Naive thymus-derived CD4-positive, alpha-beta T cell (primary cell): ENCODE measurements at regions of chr9 and their contacts with region 1.

Region 1: GRCh38 chr9:36008774-36009300 is 27.9 kb upstream of the RECK start:
- DNase-seq: peak; percentile 4 to 73 (median 61)
- ATAC-seq: peak; percentile 98
- H3K4me3 ChIP-seq: no peak overlapping the region
- H3K4me3 Mint-ChIP-seq: peak overlapping the region in 3 of 10 donors; percentile 20 to 26 (median 23)
- H3K27ac ChIP-seq: no peak overlapping the region
- H3K27ac Mint-ChIP-seq: peak overlapping the region in 1 of 9 donors; percentile 36
- H3K4me1 ChIP-seq: peaks cover 0 to 5% of the 10 kb centered on the region in 2 donors
- H3K4me1 Mint-ChIP-seq: peaks cover 10 to 25% (median 20%) of the 10 kb centered on the region in 7 donors
- H3K27me3 ChIP-seq: no peaks in the 10 kb centered on the region
- H3K27me3 Mint-ChIP-seq: peaks cover 4 to 47% (median 20%) of the 10 kb centered on the region in 5 donors

Region 2: GRCh38 chr9:35746583-35746982 is 262.3 kb before region 1 on chr9:
- CTCF ChIA-PET with region 1: no interaction called
- POLR2A ChIA-PET with region 1: no interaction called
- intact Hi-C with region 1: no loop called
- DNase-seq: no peak
- ATAC-seq: no peak
- H3K4me3 ChIP-seq: no peak overlapping the region
- H3K4me3 Mint-ChIP-seq: peak overlapping the region in 9 of 10 donors; percentile 54 to 93 (median 89)
- H3K27ac ChIP-seq: no peak overlapping the region
- H3K27ac Mint-ChIP-seq: peak overlapping the region in 5 of 9 donors; percentile 25 to 96 (median 49)
- H3K4me1 ChIP-seq: peaks cover 32 to 33% of the 10 kb centered on the region in 2 donors
- H3K4me1 Mint-ChIP-seq: peaks cover 43 to 83% (median 57%) of the 10 kb centered on the region in 7 donors
- H3K27me3 ChIP-seq: no peaks in the 10 kb centered on the region
- H3K27me3 Mint-ChIP-seq: no peaks in the 10 kb centered on the region

Region 3: DNA sequence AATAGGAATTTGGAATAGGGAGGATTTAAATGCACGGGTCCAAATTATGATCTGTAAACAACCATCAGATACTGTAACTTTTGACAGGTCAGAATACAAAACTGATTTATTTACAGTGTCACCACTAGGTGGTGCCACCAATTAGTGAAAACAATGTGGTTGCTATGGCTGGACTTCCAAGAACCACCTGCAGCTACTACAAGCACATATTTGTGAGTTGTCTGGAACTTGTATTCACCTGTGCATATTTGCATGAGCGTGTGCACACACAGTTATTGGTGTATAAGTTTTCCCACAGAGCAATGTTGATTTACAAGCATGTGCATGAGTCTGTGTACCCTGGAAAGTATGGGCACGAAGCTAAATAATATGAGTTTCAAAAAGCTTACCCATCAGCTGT is 105.8 kb before region 1 on chr9:
- CTCF ChIA-PET with region 1: interaction called, 3 read pairs
- POLR2A ChIA-PET with region 1: no interaction called
- intact Hi-C with region 1: loop called in 1 of 2 experiments (anchors 1 kb)
- DNase-seq: peak in 7 of 9 donors; percentile 41 to 69 (median 63)
- ATAC-seq: peak; percentile 88
- H3K4me3 ChIP-seq: no peak overlapping the region
- H3K4me3 Mint-ChIP-seq: no peak overlapping the region
- H3K27ac ChIP-seq: no peak overlapping the region
- H3K27ac Mint-ChIP-seq: peak overlapping the region in 1 of 9 donors; percentile 67
- H3K4me1 ChIP-seq: peaks cover 3 to 31% of the 10 kb centered on the region in 2 donors
- H3K4me1 Mint-ChIP-seq: peaks cover 8 to 45% (median 28%) of the 10 kb centered on the region in 7 donors
- H3K27me3 ChIP-seq: peaks cover 0 to 3% of the 10 kb centered on the region in 2 donors
- H3K27me3 Mint-ChIP-seq: peaks cover 0 to 23% (median 0%) of the 10 kb centered on the region in 5 donors

Region 4: DNA sequence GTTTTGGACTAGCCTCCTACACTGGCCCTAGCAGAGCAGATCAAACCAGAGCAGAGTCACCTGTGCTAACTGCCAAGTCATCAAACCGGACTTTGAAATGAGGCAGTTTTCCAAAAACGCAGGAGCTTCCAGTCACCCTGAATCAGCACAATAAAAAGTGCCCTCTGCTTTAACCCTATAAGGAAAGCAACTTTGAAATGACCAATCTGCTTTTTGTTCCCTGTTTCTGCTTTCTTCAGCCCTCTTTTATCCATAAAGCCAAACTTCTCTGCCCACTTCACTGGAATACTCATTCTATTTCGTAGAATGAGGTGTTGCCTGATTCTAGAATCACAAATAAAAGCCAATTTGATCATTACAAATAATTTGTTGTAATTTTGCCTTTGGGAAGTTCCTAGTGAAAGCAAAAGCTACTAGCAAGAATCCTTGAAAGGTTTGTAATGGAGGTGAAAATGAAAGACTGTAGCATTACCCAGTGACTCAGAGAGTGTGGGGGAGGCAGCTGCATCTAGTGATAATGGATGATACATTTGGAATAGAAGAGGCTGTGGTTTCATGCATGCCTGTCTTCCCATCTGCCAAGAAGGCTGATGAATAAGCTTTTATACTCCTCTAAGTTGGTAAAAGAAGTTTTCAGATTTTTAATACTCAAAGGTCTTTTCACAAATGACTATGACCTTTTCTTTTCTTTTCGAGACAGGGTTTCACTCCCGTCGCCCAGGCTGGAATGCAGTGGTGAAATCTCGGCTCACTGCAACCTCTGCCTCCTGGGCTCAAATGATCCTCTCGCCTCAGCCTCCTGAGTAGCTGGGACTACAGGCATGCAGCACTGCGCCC is 84.7 kb before region 1 on chr9:
- CTCF ChIA-PET with region 1: no interaction called
- POLR2A ChIA-PET with region 1: no interaction called
- intact Hi-C with region 1: no loop called
- DNase-seq: no peak
- ATAC-seq: no peak
- H3K4me3 ChIP-seq: no peak overlapping the region
- H3K4me3 Mint-ChIP-seq: no peak overlapping the region
- H3K27ac ChIP-seq: no peak overlapping the region
- H3K27ac Mint-ChIP-seq: peak overlapping the region in 1 of 9 donors; percentile 19
- H3K4me1 ChIP-seq: no peaks in the 10 kb centered on the region
- H3K4me1 Mint-ChIP-seq: peaks cover 1 to 27% (median 14%) of the 10 kb centered on the region in 7 donors
- H3K27me3 ChIP-seq: no peaks in the 10 kb centered on the region
- H3K27me3 Mint-ChIP-seq: peaks cover 0 to 20% (median 0%) of the 10 kb centered on the region in 5 donors

Region 5: DNA sequence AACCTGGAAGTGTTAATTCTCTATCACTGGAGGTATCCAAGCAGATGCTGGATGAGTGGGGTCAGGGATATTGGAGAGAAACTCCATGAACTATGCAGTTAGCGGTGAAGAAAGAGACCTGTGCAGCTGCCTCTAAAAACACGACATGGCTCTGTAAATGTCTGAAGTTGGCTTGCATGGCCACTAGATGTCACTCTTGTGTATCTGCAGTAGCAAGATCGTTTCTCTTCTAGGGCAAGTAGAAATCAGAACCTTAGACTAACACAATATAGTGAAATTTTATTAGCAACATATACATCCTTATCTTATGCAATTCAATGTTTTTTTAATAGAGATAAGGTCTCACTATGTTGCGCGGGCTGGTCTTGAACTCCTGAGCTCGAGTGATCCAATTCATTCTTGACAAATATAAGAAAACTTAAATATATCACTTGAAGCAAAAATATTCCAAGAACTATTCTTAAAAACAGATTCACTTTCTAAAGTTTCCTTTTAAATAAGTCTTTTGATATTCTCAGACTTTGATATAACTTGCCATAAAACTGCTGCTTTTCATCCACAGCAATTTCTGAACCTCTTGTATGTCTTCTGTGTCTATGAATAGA is 53.8 kb before region 1 on chr9:
- CTCF ChIA-PET with region 1: interaction called, 6 read pairs
- POLR2A ChIA-PET with region 1: no interaction called
- intact Hi-C with region 1: loop called (anchors 1 to 5 kb)
- DNase-seq: peak in 7 of 9 donors; percentile 47 to 74 (median 66)
- ATAC-seq: peak; percentile 90
- H3K4me3 ChIP-seq: no peak overlapping the region
- H3K4me3 Mint-ChIP-seq: peak overlapping the region in 1 of 10 donors; percentile 29
- H3K27ac ChIP-seq: no peak overlapping the region
- H3K27ac Mint-ChIP-seq: peak overlapping the region in 1 of 9 donors; percentile 13
- H3K4me1 ChIP-seq: no peaks in the 10 kb centered on the region
- H3K4me1 Mint-ChIP-seq: peaks cover 0 to 18% (median 8%) of the 10 kb centered on the region in 7 donors
- H3K27me3 ChIP-seq: no peaks in the 10 kb centered on the region
- H3K27me3 Mint-ChIP-seq: peaks cover 0 to 25% (median 0%) of the 10 kb centered on the region in 5 donors

Region 6: DNA sequence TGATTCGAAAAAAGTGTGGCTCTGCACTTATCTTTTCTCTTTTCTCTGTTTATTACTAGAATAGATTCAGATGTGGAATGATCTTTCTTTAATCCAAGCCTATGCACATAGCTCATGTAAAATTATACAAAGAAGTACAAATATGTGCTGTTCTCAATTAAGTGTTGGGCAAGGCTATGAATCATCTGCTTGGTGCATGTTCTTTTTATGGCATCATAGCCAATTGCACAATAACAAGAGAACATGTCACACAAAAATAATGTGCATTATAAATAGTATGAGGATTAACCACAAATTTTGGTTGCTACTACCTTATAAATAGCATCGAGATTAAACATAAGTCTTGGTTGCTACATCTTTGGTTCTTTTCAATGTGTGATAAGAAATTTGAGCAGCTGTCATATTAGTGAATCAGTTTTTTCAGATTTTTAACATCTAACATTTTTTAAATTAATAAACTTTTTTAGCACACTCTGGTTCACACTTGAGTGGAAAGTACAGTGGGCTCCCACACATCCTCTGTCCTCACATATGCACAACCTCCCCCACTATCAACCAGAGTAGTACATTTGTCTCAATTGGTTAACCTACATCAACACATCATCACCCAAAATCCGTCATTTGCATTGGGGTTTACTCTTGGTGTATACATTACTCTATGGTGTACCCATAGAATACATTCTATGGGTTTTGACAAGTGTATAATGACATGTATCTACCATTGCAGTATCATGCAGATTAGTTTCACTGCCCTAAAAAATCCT is 21.1 kb after region 1 on chr9:
- CTCF ChIA-PET with region 1: interaction called, 13 read pairs
- POLR2A ChIA-PET with region 1: no interaction called
- intact Hi-C with region 1: no loop called
- DNase-seq: no peak
- ATAC-seq: no peak
- H3K4me3 ChIP-seq: no peak overlapping the region
- H3K4me3 Mint-ChIP-seq: no peak overlapping the region
- H3K27ac ChIP-seq: no peak overlapping the region
- H3K27ac Mint-ChIP-seq: no peak overlapping the region
- H3K4me1 ChIP-seq: no peaks in the 10 kb centered on the region
- H3K4me1 Mint-ChIP-seq: peaks cover 0 to 3% (median 0%) of the 10 kb centered on the region in 7 donors
- H3K27me3 ChIP-seq: no peaks in the 10 kb centered on the region
- H3K27me3 Mint-ChIP-seq: peaks cover 0 to 43% (median 0%) of the 10 kb centered on the region in 5 donors